B cell (primary cell): ENCODE measurements at regions of chr6 and their contacts with region 1.

Region 1: DNA sequence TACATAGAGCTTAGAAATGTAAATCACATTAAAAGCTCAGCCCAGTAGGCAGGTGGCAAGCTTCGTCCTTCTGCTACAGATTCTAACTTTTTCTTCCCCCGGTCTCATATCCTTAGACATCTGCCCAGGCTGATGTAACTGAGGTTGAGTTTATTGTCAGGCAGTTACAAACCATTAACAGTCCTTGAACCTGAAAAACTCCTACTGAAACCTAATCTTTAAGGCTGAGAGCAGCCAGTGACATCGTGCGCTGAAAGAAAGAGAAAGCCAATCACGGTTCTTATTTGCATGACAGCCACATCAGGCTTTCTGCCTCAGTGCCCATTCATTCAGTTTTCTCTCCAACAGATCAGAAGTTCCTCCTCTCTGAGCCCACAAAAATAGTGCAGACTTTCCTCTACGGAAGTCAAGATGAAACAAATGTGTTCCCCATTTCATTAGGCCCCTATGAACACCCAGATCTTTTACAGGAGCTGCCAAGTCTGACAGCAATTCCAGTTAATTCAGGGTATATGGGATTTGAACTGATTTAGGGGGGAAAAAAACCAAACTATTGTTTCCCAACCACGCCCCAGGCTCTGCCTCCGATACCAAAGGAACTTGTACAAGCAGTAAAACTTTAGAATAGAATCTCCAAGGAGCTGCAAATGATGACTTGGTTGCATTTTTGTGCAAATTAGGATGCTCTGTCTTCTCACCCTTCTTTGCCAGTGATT is at the start of gene NHSL1:
- DNase-seq: peak; percentile 72
- ATAC-seq: peak; percentile 88
- H3K4me3 ChIP-seq: peak within 1 kb of the TSS in 4 of 5 experiments; percentile 8 to 51 (median 42)
- H3K4me3 Mint-ChIP-seq: peak within 1 kb of the TSS; percentile 87
- H3K27ac ChIP-seq: peak within 1 kb of the TSS in 1 of 2 donors; percentile 6
- H3K27ac Mint-ChIP-seq: peak within 1 kb of the TSS; percentile 60
- H3K4me1 ChIP-seq: peaks cover 15 to 21% of the 10 kb centered on the region in 2 donors
- H3K4me1 Mint-ChIP-seq: peaks cover 18% of the 10 kb centered on the region
- H3K27me3 ChIP-seq: peaks cover 0 to 3% (median 0%) of the 10 kb centered on the region in 4 experiments
- H3K27me3 Mint-ChIP-seq: peaks cover 18% of the 10 kb centered on the region
- CTCF ChIP-seq: no peak
- total RNA-seq, gene NHSL1: 0.10 and 0.39 TPM in 2 replicates

Region 2: GRCh38 chr6:138455746-138456400 is 43.6 kb before region 1 on chr6:
- CTCF ChIA-PET with region 1: no interaction called
- POLR2A ChIA-PET with region 1: no interaction called
- intact Hi-C with region 1: loop called (anchors 2 kb)
- DNase-seq: peak; percentile 70
- ATAC-seq: peak; percentile 75
- H3K4me3 ChIP-seq: peak overlapping the region in 2 of 5 experiments; percentile 36 to 44
- H3K4me3 Mint-ChIP-seq: peak overlapping the region; percentile 76
- H3K27ac ChIP-seq: peak overlapping the region in 1 of 2 donors; percentile 3
- H3K27ac Mint-ChIP-seq: peak overlapping the region; percentile 66
- H3K4me1 ChIP-seq: peaks cover 19 to 24% of the 10 kb centered on the region in 2 donors
- H3K4me1 Mint-ChIP-seq: peaks cover 21% of the 10 kb centered on the region
- H3K27me3 ChIP-seq: no peaks in the 10 kb centered on the region
- H3K27me3 Mint-ChIP-seq: peaks cover 3% of the 10 kb centered on the region
- CTCF ChIP-seq: no peak

Region 3: DNA sequence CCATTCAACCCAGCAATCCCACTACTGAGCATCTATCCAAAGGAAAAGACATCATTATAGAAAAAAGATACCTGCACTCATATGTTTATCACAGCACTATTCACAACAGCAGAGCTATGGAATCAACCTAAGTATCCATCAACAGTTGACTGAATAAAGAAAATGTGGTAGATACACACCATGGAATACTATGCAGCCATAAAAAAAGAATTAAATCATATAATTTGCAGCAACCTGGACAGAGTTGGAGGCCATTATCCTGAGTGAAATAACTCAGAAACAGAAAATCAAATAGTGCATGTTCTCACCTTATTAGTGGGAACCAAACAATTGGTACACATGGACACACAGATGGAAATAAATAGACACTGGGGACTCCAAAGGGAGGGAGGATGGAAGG is 23.3 kb before region 1 on chr6:
- CTCF ChIA-PET with region 1: no interaction called
- POLR2A ChIA-PET with region 1: no interaction called
- intact Hi-C with region 1: no loop called
- DNase-seq: no peak
- ATAC-seq: no peak
- H3K4me3 ChIP-seq: no peak overlapping the region
- H3K4me3 Mint-ChIP-seq: no peak overlapping the region
- H3K27ac ChIP-seq: no peak overlapping the region
- H3K27ac Mint-ChIP-seq: no peak overlapping the region
- H3K4me1 ChIP-seq: no peaks in the 10 kb centered on the region
- H3K4me1 Mint-ChIP-seq: no peaks in the 10 kb centered on the region
- H3K27me3 ChIP-seq: peaks cover 0 to 2% (median under 1%) of the 10 kb centered on the region in 4 experiments
- H3K27me3 Mint-ChIP-seq: peaks cover 4% of the 10 kb centered on the region
- CTCF ChIP-seq: no peak

Region 4: GRCh38 chr6:138517635-138518034 is 18.2 kb after region 1 on chr6:
- CTCF ChIA-PET with region 1: interaction called, 15 read pairs
- POLR2A ChIA-PET with region 1: no interaction called
- intact Hi-C with region 1: no loop called
- DNase-seq: peak; percentile 70
- ATAC-seq: peak; percentile 86
- H3K4me3 ChIP-seq: no peak overlapping the region
- H3K4me3 Mint-ChIP-seq: no peak overlapping the region
- H3K27ac ChIP-seq: no peak overlapping the region
- H3K27ac Mint-ChIP-seq: peak overlapping the region; percentile 21
- H3K4me1 ChIP-seq: no peaks in the 10 kb centered on the region
- H3K4me1 Mint-ChIP-seq: no peaks in the 10 kb centered on the region
- H3K27me3 ChIP-seq: no peaks in the 10 kb centered on the region
- H3K27me3 Mint-ChIP-seq: peaks cover 17% of the 10 kb centered on the region
- CTCF ChIP-seq: peak; percentile 88

Region 5: DNA sequence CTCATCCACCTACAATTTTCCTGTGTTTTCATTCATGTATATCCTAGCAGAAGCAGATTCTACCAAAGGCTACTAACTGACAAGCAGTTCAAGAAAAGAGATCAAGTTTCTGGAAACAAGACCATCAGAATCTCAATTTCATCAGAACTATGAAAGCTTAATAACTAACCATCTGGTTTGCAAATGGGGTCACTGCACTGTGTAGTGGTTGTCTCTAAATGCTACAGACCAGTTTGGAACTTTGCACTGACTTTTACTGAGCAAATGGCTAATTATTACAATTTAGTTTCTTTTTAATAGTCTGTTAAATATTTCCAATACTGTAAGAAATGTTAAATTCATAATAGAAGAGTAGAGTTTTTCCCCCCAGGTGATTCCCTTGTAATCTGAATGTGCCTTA is 424.1 kb after region 1 on chr6:
- CTCF ChIA-PET with region 1: no interaction called
- POLR2A ChIA-PET with region 1: no interaction called
- intact Hi-C with region 1: no loop called
- DNase-seq: no peak
- ATAC-seq: no peak
- H3K4me3 ChIP-seq: no peak overlapping the region
- H3K4me3 Mint-ChIP-seq: no peak overlapping the region
- H3K27ac ChIP-seq: no peak overlapping the region
- H3K27ac Mint-ChIP-seq: no peak overlapping the region
- H3K4me1 ChIP-seq: no peaks in the 10 kb centered on the region
- H3K4me1 Mint-ChIP-seq: no peaks in the 10 kb centered on the region
- H3K27me3 ChIP-seq: no peaks in the 10 kb centered on the region
- H3K27me3 Mint-ChIP-seq: no peaks in the 10 kb centered on the region
- CTCF ChIP-seq: no peak

Region 6: DNA sequence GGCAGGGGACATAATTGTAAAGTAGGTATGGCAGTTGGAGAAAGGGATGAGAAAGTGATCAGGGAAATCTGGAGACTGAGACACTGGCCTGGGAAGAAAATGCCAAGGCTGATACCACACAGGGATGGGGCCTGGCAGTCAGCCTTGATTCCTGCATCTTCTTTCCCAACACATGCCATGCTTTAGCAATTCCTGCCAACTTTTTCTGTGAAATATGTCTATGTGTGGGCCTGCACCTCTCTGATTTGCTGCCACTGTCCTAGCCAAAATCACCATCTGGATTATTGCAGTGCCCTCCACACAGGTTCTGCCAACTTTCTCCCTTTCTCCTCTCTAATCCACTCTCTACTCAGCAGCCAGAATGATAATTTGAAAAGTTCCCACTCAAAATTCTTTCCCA is 1634.8 kb after region 1 on chr6:
- CTCF ChIA-PET with region 1: no interaction called
- POLR2A ChIA-PET with region 1: no interaction called
- intact Hi-C with region 1: no loop called
- DNase-seq: no peak
- ATAC-seq: no peak
- H3K4me3 ChIP-seq: no peak overlapping the region
- H3K4me3 Mint-ChIP-seq: no peak overlapping the region
- H3K27ac ChIP-seq: no peak overlapping the region
- H3K27ac Mint-ChIP-seq: no peak overlapping the region
- H3K4me1 ChIP-seq: no peaks in the 10 kb centered on the region
- H3K4me1 Mint-ChIP-seq: no peaks in the 10 kb centered on the region
- H3K27me3 ChIP-seq: no peaks in the 10 kb centered on the region
- H3K27me3 Mint-ChIP-seq: no peaks in the 10 kb centered on the region
- CTCF ChIP-seq: no peak